HEK293T (cell line): ENCODE measurements at regions of chr1 and their contacts with region 1.

Region 1: DNA sequence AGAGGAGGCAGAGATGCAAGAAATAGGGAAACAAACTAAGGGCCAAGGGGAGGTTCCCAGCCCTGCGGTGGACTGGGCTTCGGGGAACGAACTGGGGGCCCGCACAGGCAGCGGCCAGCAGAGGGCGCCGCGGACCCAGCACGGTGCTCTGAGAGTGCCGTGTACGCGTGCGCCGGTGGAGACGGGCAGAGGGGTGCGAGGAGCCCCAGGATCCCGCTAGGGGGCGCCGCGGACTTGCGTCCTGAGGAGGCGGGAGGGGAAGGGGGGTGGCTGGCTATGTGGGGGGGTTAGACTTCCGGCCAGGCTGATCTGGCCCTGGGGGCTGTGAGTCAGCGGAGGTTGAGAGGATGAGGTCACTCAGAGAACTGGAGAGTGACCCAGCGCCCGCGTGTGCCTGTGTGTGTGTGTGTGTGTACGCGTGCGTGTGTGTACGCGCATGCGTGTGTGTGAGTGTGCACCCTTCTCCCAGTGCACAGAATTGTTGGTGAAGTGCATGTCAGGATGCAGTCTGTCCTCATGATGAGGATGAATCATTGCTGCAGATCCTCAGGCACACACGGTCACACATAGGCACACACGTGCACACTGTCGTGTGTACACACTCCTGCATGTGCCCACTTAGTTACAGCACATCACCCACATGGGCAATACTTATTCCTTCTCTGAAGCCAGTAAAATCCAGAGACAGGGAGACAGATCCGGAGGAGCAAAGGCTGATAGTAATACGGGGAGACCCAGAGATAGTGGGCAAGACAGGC is 17.0 kb downstream of the NES start:
- DNase-seq: peak; percentile 100

Region 2: GRCh38 chr1:156618853-156619581 is 41.2 kb before region 1 on chr1 and contains the start of gene HAPLN2:
- CTCF ChIA-PET with region 1: interaction called, 97 read pairs
- POLR2A ChIA-PET with region 1: interaction called, 25 read pairs
- DNase-seq: peak; percentile 66

Region 3: DNA sequence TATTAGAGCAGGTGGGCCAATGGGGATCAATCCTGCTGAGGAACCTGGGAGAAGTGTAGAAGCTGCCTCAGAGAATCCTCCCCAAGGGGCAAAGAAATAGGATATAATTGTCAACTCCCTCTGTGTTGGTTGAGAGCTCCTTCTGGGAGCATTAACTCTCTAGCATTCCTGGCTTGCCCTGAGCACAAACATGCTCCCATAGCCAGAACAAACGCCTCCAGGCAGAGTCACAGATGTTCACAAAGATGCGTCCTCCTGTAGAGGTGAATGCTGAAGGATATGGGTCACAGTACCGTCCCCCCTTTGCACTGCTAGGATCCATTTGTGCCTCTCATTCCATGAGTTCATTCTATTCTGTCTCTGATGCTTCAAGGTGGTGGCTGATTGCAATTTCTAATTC is 27.8 kb before region 1 on chr1:
- CTCF ChIA-PET with region 1: interaction called, 97 read pairs
- POLR2A ChIA-PET with region 1: interaction called, 5 read pairs
- DNase-seq: no peak

Region 4: GRCh38 chr1:156677616-156678596 is 17.7 kb after region 1 on chr1:
- CTCF ChIA-PET with region 1: interaction called, 70 read pairs
- POLR2A ChIA-PET with region 1: interaction called, 122 read pairs
- DNase-seq: peak; percentile 80